Activated CD4-positive, alpha-beta T cell treated with anti-CD3 and anti-CD28 coated beads for 36 hours (primary cell): ENCODE measurements at regions of chr3 and their contacts with region 1.

Region 1: GRCh38 chr3:134212906-134213665 is 37.6 kb downstream of the RYK start:
- DNase-seq: peak; percentile 94
- ATAC-seq: peak; percentile 90
- H3K4me3 Mint-ChIP-seq: no peak overlapping the region
- H3K27ac Mint-ChIP-seq: no peak overlapping the region
- H3K4me1 Mint-ChIP-seq: peaks cover 25% of the 10 kb centered on the region
- H3K27me3 Mint-ChIP-seq: no peaks in the 10 kb centered on the region

Region 2: GRCh38 chr3:133927540-133928066 is 285.5 kb before region 1 on chr3:
- CTCF ChIA-PET with region 1: no interaction called
- POLR2A ChIA-PET with region 1: no interaction called
- intact Hi-C with region 1: loop called in 1 of 2 experiments (anchors 2 kb)
- DNase-seq: peak; percentile 83
- ATAC-seq: peak; percentile 82
- H3K4me3 Mint-ChIP-seq: peak overlapping the region; percentile 38
- H3K27ac Mint-ChIP-seq: no peak overlapping the region
- H3K4me1 Mint-ChIP-seq: peaks cover 6% of the 10 kb centered on the region
- H3K27me3 Mint-ChIP-seq: peaks cover 16% of the 10 kb centered on the region

Region 3: DNA sequence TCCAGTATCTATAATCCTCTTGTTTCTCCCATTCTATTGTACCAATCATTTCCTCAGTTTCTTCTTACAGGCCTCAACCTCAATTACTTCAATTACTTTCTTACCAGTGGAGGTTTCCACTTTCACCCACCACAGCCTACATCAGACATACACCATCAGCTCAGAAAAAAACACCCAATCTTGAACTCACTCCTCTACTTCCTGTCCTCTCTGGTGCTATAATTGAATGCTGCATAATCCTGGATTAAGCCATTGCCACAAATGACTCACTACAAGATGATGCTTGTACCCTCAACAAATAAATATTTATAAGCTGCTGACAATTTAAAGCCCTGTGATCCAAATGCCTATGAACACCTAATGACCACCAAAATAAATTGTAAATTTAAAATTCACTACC is 19.1 kb after region 1 on chr3:
- CTCF ChIA-PET with region 1: interaction called, 61 read pairs
- POLR2A ChIA-PET with region 1: no interaction called
- intact Hi-C with region 1: no loop called
- DNase-seq: no peak
- ATAC-seq: peak; percentile 85
- H3K4me3 Mint-ChIP-seq: no peak overlapping the region
- H3K27ac Mint-ChIP-seq: peak overlapping the region; percentile 75
- H3K4me1 Mint-ChIP-seq: peaks cover 75% of the 10 kb centered on the region
- H3K27me3 Mint-ChIP-seq: no peaks in the 10 kb centered on the region

Region 4: GRCh38 chr3:134250717-134251220 is 37.7 kb after region 1 on chr3 and contains the start of gene RYK:
- CTCF ChIA-PET with region 1: interaction called, 18 read pairs
- POLR2A ChIA-PET with region 1: no interaction called
- intact Hi-C with region 1: loop called (anchors 1 to 5 kb)
- DNase-seq: peak; percentile 84
- ATAC-seq: peak; percentile 78
- H3K4me3 Mint-ChIP-seq: peak within 1 kb of the TSS; percentile 98
- H3K27ac Mint-ChIP-seq: peak within 1 kb of the TSS; percentile 98
- H3K4me1 Mint-ChIP-seq: peaks cover 68% of the 10 kb centered on the region
- H3K27me3 Mint-ChIP-seq: peaks cover 3% of the 10 kb centered on the region
- total RNA-seq, gene RYK: 23.5 to 24.0 TPM

Region 5: GRCh38 chr3:134299185-134299887 is 86.2 kb after region 1 on chr3:
- CTCF ChIA-PET with region 1: interaction called, 29 read pairs
- POLR2A ChIA-PET with region 1: interaction called, 4 read pairs
- intact Hi-C with region 1: loop called (anchors 1 kb)
- DNase-seq: no peak
- ATAC-seq: no peak
- H3K4me3 Mint-ChIP-seq: no peak overlapping the region
- H3K27ac Mint-ChIP-seq: no peak overlapping the region
- H3K4me1 Mint-ChIP-seq: no peaks in the 10 kb centered on the region
- H3K27me3 Mint-ChIP-seq: peaks cover 32% of the 10 kb centered on the region

Region 6: GRCh38 chr3:134378384-134378783 is 165.3 kb after region 1 on chr3:
- CTCF ChIA-PET with region 1: interaction called, 4 read pairs
- POLR2A ChIA-PET with region 1: no interaction called
- intact Hi-C with region 1: loop called (anchors 1 to 5 kb)
- DNase-seq: peak; percentile 53
- ATAC-seq: no peak
- H3K4me3 Mint-ChIP-seq: no peak overlapping the region
- H3K27ac Mint-ChIP-seq: no peak overlapping the region
- H3K4me1 Mint-ChIP-seq: peaks cover 9% of the 10 kb centered on the region
- H3K27me3 Mint-ChIP-seq: peaks cover 21% of the 10 kb centered on the region